ENCODE measurements at regions of chr6 and their contacts with region 1.

Region 1: GRCh38 chr6:12233693-12234571 is 56.2 kb upstream of the EDN1 start:
- DNase-seq: peak; percentile 15
- ATAC-seq: peak; percentile 62
- H3K4me3 Mint-ChIP-seq: no peak overlapping the region
- H3K27ac Mint-ChIP-seq: no peak overlapping the region
- H3K4me1 Mint-ChIP-seq: peaks cover 14% of the 10 kb centered on the region
- H3K27me3 Mint-ChIP-seq: no peaks in the 10 kb centered on the region
- CTCF ChIP-seq: no peak

Region 2: DNA sequence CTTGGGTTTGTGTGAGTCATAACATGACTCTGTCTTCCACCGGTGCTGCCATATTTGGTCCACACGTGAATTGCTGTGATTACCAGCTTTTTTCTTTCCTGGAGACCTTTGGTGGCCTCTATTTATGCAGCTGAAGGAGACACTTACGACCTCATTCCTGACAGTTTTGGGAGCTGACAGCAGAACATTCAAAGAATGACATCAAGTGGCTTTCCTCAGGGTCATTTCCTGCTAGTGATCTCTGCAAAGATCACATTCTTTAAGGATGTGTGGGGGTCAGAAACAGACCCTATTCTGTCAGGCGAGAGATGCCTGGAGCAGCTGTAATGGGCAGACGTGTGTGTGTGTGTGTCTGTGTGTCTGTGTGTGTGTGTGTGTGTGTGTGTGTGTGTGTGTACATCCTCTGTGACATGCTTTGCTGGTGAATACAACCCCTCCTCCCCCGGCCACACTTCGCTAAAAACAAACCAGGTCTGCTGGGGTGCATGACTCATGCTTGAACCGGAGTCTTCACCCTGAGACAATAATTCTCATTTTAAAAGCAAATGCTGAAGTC is 580.8 kb before region 1 on chr6:
- CTCF ChIA-PET with region 1: interaction called, 79 read pairs
- POLR2A ChIA-PET with region 1: interaction called, 10 read pairs
- intact Hi-C with region 1: loop called (anchors 1 kb)
- DNase-seq: no peak
- ATAC-seq: peak; percentile 31
- H3K4me3 Mint-ChIP-seq: no peak overlapping the region
- H3K27ac Mint-ChIP-seq: no peak overlapping the region
- H3K4me1 Mint-ChIP-seq: no peaks in the 10 kb centered on the region
- H3K27me3 Mint-ChIP-seq: peaks cover 9% of the 10 kb centered on the region
- CTCF ChIP-seq: no peak

Region 3: GRCh38 chr6:11700118-11700718 is 533.7 kb before region 1 on chr6:
- CTCF ChIA-PET with region 1: interaction called, 26 read pairs
- POLR2A ChIA-PET with region 1: no interaction called
- intact Hi-C with region 1: loop called (anchors 1 kb)
- DNase-seq: no peak
- ATAC-seq: no peak
- H3K4me3 Mint-ChIP-seq: no peak overlapping the region
- H3K27ac Mint-ChIP-seq: no peak overlapping the region
- H3K4me1 Mint-ChIP-seq: no peaks in the 10 kb centered on the region
- H3K27me3 Mint-ChIP-seq: no peaks in the 10 kb centered on the region
- CTCF ChIP-seq: no peak

Region 4: DNA sequence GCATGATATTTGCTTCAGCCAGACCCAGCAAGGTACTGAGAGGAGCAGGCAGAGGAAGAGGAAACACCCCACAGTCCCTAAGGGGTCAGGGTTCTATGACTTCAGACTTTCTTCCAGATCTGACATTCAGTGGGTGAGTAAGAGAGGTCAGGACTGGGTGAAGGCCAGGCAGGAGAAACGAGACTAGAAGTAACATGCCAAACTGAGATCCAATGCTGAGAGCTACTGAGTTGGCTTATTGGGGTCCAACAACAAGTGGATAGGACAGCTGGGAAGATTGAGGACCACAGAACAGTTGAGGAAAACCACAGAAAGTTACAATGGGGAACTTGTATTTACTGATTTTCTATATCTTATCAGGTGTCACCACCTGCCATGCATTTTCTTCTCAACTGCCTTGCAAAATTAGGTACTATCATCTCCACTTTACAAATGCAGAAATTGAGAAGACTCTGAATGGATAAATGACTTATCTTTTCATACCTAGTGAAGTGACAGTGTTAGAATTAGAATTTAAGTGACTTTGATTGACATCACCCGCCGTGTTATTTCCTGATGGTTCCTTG is 265.6 kb before region 1 on chr6:
- CTCF ChIA-PET with region 1: no interaction called
- POLR2A ChIA-PET with region 1: no interaction called
- intact Hi-C with region 1: loop called (anchors 10 kb)
- DNase-seq: no peak
- ATAC-seq: peak; percentile 99
- H3K4me3 Mint-ChIP-seq: no peak overlapping the region
- H3K27ac Mint-ChIP-seq: peak overlapping the region; percentile 9
- H3K4me1 Mint-ChIP-seq: peaks cover 20% of the 10 kb centered on the region
- H3K27me3 Mint-ChIP-seq: peaks cover 2% of the 10 kb centered on the region
- CTCF ChIP-seq: no peak

Region 5: DNA sequence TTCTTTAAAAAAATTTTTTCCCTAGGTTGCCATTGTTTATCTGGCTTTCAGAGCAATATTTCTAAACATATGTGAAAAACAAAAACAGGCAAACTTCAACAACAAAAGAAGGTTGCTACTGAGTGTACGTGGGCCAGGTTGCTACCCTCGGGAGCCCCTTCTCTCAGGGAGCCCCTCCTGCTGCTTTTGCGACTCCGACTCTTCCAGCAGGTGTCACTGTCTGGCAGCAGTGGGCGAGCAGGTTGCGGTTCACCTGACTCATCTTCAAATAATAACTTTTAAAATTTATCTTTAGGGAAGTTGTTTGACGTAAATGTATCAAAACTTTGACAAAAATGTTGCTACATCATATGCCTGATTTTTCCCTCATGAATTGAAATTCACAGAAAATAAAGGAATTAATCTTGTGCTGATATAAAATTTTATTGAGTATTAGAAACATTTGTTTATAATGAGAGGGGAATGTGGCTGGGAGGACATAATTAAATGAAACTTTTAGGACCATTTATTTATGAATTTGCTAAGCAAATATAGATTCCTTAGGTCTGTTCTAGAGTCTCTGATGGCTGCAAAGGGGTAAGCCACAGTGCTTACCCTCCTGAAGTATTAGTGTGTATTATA is 83.0 kb before region 1 on chr6:
- CTCF ChIA-PET with region 1: no interaction called
- POLR2A ChIA-PET with region 1: no interaction called
- intact Hi-C with region 1: loop called (anchors 1 kb)
- DNase-seq: no peak
- ATAC-seq: no peak
- H3K4me3 Mint-ChIP-seq: no peak overlapping the region
- H3K27ac Mint-ChIP-seq: no peak overlapping the region
- H3K4me1 Mint-ChIP-seq: peaks cover 16% of the 10 kb centered on the region
- H3K27me3 Mint-ChIP-seq: no peaks in the 10 kb centered on the region
- CTCF ChIP-seq: no peak